HCT116 (cell line): ENCODE measurements at regions of chr12 and their contacts with region 1.

Region 1: DNA sequence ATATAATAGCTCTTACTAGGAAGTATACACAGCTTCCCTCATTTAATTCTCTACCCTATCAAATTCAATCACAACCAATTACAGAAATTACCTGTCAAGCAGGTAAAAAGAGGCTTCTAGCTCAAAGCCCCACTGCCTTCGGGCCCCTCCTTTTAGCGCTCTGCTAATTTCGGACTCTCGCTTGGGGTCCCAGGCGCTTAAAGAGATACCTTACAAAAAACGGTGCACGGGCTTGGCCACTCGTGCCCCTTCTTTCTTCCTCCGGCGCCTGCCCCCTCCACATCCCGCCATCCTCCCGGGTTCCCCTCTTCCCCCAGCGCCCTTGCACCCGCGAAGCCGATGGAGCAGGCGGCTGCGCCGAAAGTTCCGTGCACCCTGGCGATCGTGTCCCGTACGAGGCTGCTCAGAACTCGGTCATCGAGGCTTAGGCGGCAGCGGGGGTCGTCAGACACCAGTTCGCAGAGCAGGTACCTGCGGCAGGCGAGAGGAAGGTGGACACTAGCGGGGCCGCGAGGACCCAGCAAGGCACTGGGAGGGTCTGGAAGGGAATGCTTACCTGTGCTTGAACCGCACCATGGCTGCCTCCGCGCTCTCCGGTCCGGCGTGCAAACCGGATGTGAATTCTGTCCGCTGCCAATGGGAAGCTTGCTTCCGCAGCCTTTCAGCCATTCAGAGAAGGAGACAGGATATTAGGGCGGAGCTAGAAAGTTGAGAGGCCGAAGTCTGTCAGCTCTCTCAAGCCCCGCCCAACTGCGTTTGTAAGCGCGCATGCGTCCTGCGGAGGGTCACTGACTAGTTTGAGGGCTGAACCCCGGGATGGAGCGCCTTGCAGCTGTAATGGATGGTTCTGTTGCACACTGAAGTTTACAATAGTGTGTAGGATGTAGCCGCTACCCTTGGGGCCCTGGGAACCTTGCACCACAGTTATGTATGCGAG is at the start of gene POP5:
- DNase-seq: peak; percentile 96
- ATAC-seq: peak; percentile 89
- H3K4me3 ChIP-seq: peak within 1 kb of the TSS; percentile 82 to 95
- H3K27ac ChIP-seq: peak within 1 kb of the TSS; percentile 51
- H3K4me1 ChIP-seq: peaks cover 6 to 33% of the 10 kb centered on the region in 2 experiments
- H3K27me3 ChIP-seq: no peaks in the 10 kb centered on the region
- CTCF ChIP-seq: no peak
- POLR2A ChIP-seq: peak; percentile 44
- RAD21 ChIP-seq: no peak
- total RNA-seq, gene POP5: 66.9 TPM

Region 2: GRCh38 chr12:120596901-120597300 is 15.8 kb after region 1 on chr12:
- CTCF ChIA-PET with region 1: no interaction called
- POLR2A ChIA-PET with region 1: no interaction called
- RAD21 ChIA-PET with region 1: no interaction called
- intact Hi-C with region 1: no loop called
- DNase-seq: no peak
- ATAC-seq: no peak
- H3K4me3 ChIP-seq: no peak overlapping the region
- H3K27ac ChIP-seq: no peak overlapping the region
- H3K4me1 ChIP-seq: peaks cover 5 to 10% of the 10 kb centered on the region in 2 experiments
- H3K27me3 ChIP-seq: no peaks in the 10 kb centered on the region
- CTCF ChIP-seq: no peak
- POLR2A ChIP-seq: no peak
- RAD21 ChIP-seq: no peak

Region 3: GRCh38 chr12:120649442-120650232 is 68.6 kb after region 1 on chr12:
- CTCF ChIA-PET with region 1: interaction called, 34 read pairs
- POLR2A ChIA-PET with region 1: no interaction called
- RAD21 ChIA-PET with region 1: no interaction called
- intact Hi-C with region 1: loop called (anchors 1 kb)
- DNase-seq: no peak
- ATAC-seq: peak; percentile 6; the same call in 1 of the 2 replicates
- H3K4me3 ChIP-seq: peak overlapping the region in 1 of 2 experiments; percentile 59; a peak in 1 of 4 replicates
- H3K27ac ChIP-seq: no peak overlapping the region
- H3K4me1 ChIP-seq: peaks cover 5 to 32% of the 10 kb centered on the region in 2 experiments; a peak in 3 of 4 replicates
- H3K27me3 ChIP-seq: no peaks in the 10 kb centered on the region; the same call in 1 of the 2 replicates
- CTCF ChIP-seq: no peak
- POLR2A ChIP-seq: no peak
- RAD21 ChIP-seq: no peak

Region 4: DNA sequence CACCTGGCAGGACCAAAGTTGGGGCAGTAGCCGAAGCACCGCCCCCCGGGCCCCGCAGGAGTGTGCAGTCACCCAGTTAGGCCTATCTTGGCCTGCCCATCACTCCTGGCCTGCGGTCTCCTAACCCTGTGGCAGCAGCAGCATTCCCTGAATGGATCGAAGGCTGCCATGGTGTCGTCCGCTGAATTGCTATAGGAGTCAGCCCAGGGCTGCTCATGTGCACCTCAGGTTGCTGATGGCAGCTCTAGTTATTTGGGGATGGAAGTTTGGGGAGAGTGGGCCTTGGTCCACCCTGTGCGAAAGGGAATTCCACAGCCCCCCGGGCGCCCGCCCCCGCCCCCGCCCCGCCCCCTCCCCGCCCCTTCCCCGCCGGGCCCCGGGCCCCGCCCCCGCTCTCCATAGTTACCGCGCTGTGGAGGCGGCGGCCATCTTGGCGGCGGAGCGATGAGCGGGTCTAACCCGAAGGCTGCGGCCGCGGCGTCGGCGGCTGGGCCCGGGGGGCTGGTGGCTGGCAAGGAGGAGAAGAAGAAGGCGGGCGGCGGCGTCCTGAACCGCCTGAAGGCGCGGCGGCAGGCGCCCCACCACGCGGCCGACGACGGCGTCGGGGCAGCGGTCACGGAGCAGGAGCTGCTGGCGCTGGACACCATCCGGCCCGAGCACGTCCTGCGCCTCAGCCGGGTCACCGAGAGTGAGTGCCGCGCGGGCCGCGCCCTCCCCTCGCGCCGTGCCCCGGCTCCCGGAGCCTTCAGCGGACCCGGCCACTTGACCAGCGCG is 129.2 kb after region 1 on chr12 and contains the start of gene UNC119B:
- CTCF ChIA-PET with region 1: interaction called, 3 read pairs
- POLR2A ChIA-PET with region 1: interaction called, 5 read pairs
- RAD21 ChIA-PET with region 1: no interaction called
- intact Hi-C with region 1: loop called (anchors 1 kb)
- DNase-seq: no peak
- ATAC-seq: peak; percentile 81
- H3K4me3 ChIP-seq: peak within 1 kb of the TSS; percentile 86 to 90
- H3K27ac ChIP-seq: peak within 1 kb of the TSS; percentile 90
- H3K4me1 ChIP-seq: peaks cover 11 to 15% of the 10 kb centered on the region in 2 experiments
- H3K27me3 ChIP-seq: no peaks in the 10 kb centered on the region
- CTCF ChIP-seq: no peak
- POLR2A ChIP-seq: no peak
- RAD21 ChIP-seq: no peak
- total RNA-seq, gene UNC119B: 33.8 TPM

Region 5: DNA sequence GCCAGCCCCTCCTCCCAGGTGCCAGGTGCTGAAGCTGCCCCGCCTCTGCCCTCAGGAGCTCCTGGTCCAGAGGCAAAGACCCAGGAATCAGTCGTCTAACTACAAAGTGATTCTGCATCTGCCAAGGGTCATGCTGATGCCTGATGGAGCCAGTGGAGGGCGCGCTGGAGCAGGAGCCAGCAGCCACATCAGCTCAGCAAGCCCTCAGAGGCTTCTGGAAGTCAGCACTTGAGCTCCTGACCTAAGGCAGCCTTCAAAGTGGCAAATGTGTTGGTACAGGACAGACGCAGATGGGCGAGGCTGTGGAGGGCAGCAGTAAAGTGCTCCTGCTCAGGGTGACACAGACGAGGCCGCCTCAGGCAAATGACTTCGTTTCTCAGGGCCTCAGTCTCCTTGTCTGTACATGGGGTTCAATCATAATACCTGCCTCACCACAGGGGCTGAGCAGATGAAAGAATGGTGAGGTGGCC is 424.3 kb after region 1 on chr12:
- CTCF ChIA-PET with region 1: interaction called, 22 read pairs
- POLR2A ChIA-PET with region 1: no interaction called
- RAD21 ChIA-PET with region 1: no interaction called
- intact Hi-C with region 1: loop called (anchors 1 kb)
- DNase-seq: peak; percentile 46
- ATAC-seq: peak; percentile 71
- H3K4me3 ChIP-seq: no peak overlapping the region
- H3K27ac ChIP-seq: no peak overlapping the region
- H3K4me1 ChIP-seq: no peaks in the 10 kb centered on the region
- H3K27me3 ChIP-seq: no peaks in the 10 kb centered on the region
- CTCF ChIP-seq: peak; percentile 63 to 76 (median 74); a peak in 5 of 6 replicates
- POLR2A ChIP-seq: no peak
- RAD21 ChIP-seq: peak; percentile 67

Region 6: DNA sequence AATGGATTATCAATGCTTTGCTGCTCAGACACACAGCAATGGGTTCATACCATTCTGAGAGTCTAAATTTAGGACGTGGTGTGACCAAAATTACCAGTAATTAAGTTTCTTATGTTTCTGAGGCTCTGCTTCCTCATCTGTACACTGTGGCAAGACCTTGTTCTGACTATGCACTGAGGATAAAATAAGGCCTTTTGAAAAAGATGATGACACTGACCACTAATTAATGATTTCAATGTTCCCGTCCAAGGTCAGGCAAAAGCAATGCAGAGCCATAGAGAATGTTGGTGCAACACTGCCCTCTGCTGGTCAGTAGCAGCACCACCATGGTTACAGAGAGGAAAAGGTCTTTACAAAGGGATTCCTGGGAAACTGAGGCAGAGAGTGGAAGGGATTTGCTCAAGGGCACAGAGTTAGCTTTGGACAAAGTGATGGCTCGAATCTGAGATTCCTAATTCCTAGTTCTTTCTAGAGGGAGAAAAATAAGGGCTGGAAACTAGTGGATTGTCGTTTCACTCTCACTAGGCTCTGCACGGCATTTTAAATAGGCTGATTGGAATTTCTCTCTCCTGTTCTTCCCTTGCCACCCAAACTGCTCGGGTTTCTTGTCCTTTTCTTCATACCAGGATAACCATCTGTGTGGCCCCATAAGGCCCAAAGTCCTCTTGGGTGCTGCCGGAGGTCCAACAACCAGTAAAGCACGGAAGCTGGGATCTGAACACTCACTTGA is 529.3 kb after region 1 on chr12:
- CTCF ChIA-PET with region 1: no interaction called
- POLR2A ChIA-PET with region 1: no interaction called
- RAD21 ChIA-PET with region 1: no interaction called
- intact Hi-C with region 1: loop called (anchors 5 kb)
- DNase-seq: peak; percentile 56
- ATAC-seq: peak; percentile 92
- H3K4me3 ChIP-seq: no peak overlapping the region
- H3K27ac ChIP-seq: no peak overlapping the region
- H3K4me1 ChIP-seq: no peaks in the 10 kb centered on the region
- H3K27me3 ChIP-seq: no peaks in the 10 kb centered on the region
- CTCF ChIP-seq: peak; percentile 85 to 99 (median 93)
- POLR2A ChIP-seq: no peak
- RAD21 ChIP-seq: peak; percentile 95